H1 (cell line): ENCODE measurements at regions of chr1 and their contacts with region 1.

Region 1: GRCh38 chr1:3618881-3619671 is 5.7 kb upstream of the TPRG1L start:
- DNase-seq: peak in 1 of 2 experiments; percentile 89
- H3K4me3 ChIP-seq: no peak overlapping the region
- H3K27ac ChIP-seq: no peak overlapping the region
- H3K4me1 ChIP-seq: peaks cover 0 to 11% (median 4%) of the 10 kb centered on the region in 4 experiments; a peak in 5 of 7 replicates
- H3K27me3 ChIP-seq: no peaks in the 10 kb centered on the region; a peak in 1 of 7 replicates
- CTCF ChIP-seq: peak in 2 of 3 experiments; percentile 79 to 93; a peak in 3 of 4 replicates
- EP300 ChIP-seq: no peak
- POLR2A ChIP-seq: no peak
- RAD21 ChIP-seq: peak; percentile 63 to 75

Region 2: DNA sequence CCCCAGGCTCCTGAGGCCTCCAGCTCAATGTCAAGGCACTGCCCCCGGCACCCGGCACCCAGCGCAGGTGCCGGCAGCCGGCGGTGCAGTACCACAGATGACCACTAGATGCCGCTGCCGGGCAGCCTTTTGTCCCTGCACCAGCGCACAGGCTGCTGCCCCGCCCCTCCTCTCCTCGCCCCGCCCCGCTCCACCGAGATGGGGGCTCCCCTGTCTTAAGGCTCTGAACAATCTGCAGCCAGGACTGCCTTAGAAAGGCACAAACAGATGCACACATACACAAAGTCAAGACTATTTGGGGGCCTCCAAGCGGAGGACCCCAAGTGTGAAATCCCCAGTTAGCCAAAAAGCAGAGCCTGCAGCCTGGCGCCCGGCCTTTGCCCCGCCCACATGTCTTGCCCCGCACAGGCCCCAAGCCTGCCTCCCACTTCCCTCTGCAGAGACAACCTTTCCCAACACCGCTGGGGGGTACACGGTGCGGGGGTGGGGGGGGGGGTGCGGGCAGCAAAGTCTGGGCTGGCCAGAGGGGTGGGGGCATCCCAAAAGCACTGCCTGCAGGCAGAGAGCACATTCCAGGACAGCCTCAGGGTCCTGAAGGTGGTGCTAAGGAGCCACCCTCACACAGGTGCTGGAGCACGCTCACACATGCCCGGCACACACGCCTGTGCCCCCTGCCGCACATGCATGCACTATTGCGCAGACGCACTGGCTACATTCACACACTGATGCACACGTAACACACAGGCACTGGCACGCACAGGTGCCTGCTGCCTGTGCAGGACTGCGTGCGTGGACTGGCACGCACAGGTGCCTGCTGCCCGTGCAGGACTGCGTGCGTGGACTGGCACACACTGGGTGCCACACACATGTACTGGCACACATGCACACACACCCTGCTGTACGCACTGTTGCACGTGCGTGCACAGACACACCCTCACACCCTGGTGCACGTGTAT is 127.5 kb before region 1 on chr1:
- CTCF ChIA-PET with region 1: interaction called, 17 read pairs
- POLR2A ChIA-PET with region 1: interaction called, 4 read pairs
- DNase-seq: peak; percentile 44 to 97
- H3K4me3 ChIP-seq: peak overlapping the region in 1 of 4 experiments; percentile 53; a peak in 2 of 8 replicates
- H3K27ac ChIP-seq: no peak overlapping the region; the same call in 1 of the 2 replicates
- H3K4me1 ChIP-seq: peaks cover 0 to 4% (median 0%) of the 10 kb centered on the region in 4 experiments; a peak in 2 of 7 replicates
- H3K27me3 ChIP-seq: no peaks in the 10 kb centered on the region
- CTCF ChIP-seq: peak in 2 of 3 experiments; percentile 78 to 93; a peak in 3 of 4 replicates
- EP300 ChIP-seq: no peak
- POLR2A ChIP-seq: no peak
- RAD21 ChIP-seq: peak; percentile 81 to 88

Region 3: DNA sequence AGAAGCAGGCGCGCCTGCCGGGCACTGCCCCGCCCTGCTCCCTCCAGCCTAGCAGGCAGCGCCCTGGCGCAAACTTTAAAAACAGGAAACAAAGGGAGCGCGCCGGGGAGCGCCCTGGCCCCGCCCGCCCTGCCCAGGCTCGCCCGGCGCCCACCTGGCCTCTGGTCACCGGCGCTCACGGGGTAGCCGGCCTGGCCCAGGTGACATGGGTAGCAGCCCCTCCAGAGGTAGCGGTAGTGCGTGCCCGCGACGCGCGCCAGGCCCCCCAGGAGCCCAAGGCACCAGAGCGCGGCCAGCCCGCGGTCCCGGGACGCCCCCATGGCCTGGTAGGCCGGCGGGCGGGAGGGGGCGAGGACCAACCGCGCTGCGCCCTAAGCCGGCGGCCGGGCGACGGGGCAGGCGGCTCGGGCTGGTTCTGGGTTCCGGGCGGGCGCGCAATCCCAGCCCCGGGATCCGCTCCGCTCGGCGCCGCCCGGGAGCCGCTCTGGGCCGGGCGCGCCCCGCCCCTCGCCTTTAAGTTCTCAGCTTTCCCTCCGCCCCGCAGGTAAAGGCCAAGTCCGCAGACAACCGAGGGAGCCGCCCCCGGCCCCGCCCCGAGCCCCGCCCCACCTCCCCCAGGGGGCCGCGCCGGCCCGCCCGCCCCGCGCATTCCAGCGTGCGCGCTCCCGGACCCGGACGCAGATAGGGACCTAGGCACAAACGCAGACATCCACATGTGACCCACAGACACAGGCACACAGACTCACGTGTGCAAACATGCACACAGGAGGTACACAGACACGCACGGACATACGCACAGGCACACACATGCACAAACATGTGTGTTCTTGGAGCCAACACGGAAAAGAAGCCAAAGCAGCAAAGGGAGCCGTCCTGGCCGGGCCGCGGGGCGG is 87.9 kb before region 1 on chr1:
- CTCF ChIA-PET with region 1: interaction called, 34 read pairs
- POLR2A ChIA-PET with region 1: no interaction called
- DNase-seq: peak; percentile 34 to 83
- H3K4me3 ChIP-seq: peak overlapping the region; percentile 45 to 78 (median 62)
- H3K27ac ChIP-seq: no peak overlapping the region; the same call in 1 of the 2 replicates
- H3K4me1 ChIP-seq: peaks cover 0 to 13% (median 8%) of the 10 kb centered on the region in 4 experiments; a peak in 6 of 7 replicates
- H3K27me3 ChIP-seq: peaks cover 0 to 33% (median 29%) of the 10 kb centered on the region in 4 experiments; a peak in 6 of 7 replicates
- CTCF ChIP-seq: no peak
- EP300 ChIP-seq: no peak
- POLR2A ChIP-seq: peak in 1 of 2 experiments; percentile 59; a peak in 2 of 3 replicates
- RAD21 ChIP-seq: no peak

Region 4: GRCh38 chr1:3577300-3577699 is 41.8 kb before region 1 on chr1:
- CTCF ChIA-PET with region 1: interaction called, 33 read pairs
- POLR2A ChIA-PET with region 1: no interaction called
- DNase-seq: no peak
- H3K4me3 ChIP-seq: no peak overlapping the region
- H3K27ac ChIP-seq: no peak overlapping the region
- H3K4me1 ChIP-seq: no peaks in the 10 kb centered on the region; a peak in 1 of 7 replicates
- H3K27me3 ChIP-seq: no peaks in the 10 kb centered on the region
- CTCF ChIP-seq: no peak
- EP300 ChIP-seq: no peak
- POLR2A ChIP-seq: no peak
- RAD21 ChIP-seq: no peak

Region 5: DNA sequence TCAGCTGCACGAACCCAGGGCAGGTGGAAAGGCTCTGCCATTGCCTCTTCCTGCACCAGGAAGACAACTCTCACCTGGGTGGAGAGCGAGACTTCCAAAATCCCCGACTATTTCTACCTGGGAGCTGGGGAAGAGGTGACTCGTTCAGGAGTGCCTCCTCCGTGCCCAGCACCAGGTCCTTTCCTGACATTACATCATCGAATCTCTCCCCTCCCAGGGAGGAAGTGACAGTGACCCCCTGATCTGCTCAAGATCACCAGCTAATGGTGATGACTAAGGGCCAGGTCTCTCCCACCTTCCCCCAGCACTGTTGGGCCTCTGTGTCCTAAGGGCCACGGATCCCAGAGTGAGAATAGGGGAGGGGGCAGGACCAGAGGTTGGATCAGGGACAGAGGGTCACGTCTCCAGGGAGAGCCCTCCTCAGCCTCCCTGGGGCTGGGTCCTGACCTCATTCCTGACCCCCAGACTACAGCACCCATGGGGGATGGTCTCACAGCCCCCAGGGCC is 14.6 kb before region 1 on chr1:
- CTCF ChIA-PET with region 1: interaction called, 35 read pairs
- POLR2A ChIA-PET with region 1: no interaction called
- DNase-seq: no peak
- H3K4me3 ChIP-seq: no peak overlapping the region
- H3K27ac ChIP-seq: no peak overlapping the region
- H3K4me1 ChIP-seq: peaks cover 0 to 7% (median 3%) of the 10 kb centered on the region in 4 experiments; a peak in 5 of 7 replicates
- H3K27me3 ChIP-seq: no peaks in the 10 kb centered on the region
- CTCF ChIP-seq: no peak
- EP300 ChIP-seq: no peak
- POLR2A ChIP-seq: no peak
- RAD21 ChIP-seq: no peak